A673 (cell line): ENCODE measurements at regions of chr11 and their contacts with region 1.

Region 1: GRCh38 chr11:43852057-43852636 is 28.5 kb upstream of the ALKBH3 start:
- DNase-seq: peak; percentile 92
- H3K4me3 ChIP-seq: no peak overlapping the region
- H3K27ac ChIP-seq: no peak overlapping the region
- H3K4me1 ChIP-seq: no peaks in the 10 kb centered on the region
- H3K27me3 ChIP-seq: no peaks in the 10 kb centered on the region
- CTCF ChIP-seq: peak; percentile 100

Region 2: DNA sequence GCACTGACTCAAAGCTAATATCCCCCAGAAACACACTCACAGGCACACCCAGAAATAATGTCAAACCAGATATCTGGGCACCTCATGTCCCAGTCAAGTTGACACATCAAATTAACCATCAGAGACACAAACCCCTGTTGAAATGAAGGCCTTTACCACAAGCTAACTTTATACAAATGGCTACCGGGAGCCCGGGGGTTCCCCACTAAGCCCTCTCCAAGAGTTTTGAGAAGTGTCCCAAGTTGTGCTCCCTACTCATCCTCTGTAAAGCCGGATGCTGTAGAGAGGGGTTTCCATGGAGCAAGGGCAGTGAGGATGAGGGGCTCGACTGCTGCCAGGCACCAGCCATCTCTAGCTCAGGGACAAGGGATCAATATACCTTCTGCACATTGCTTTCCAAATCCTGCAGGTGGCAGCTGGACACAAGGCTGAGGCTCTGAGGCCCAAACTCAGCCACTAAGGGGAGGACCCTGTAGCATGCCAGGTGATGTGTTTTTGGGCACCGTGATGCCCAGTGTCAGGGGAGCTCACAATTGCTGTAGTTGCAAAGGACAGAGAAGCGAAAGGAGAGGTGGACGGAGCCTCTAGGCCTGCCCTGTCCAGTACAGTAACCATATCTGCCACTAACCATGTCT is 347.7 kb before region 1 on chr11:
- CTCF ChIA-PET with region 1: interaction called, 8 read pairs
- POLR2A ChIA-PET with region 1: no interaction called
- intact Hi-C with region 1: loop called (anchors 5 kb)
- DNase-seq: peak; percentile 54
- H3K4me3 ChIP-seq: no peak overlapping the region
- H3K27ac ChIP-seq: no peak overlapping the region
- H3K4me1 ChIP-seq: no peaks in the 10 kb centered on the region
- H3K27me3 ChIP-seq: no peaks in the 10 kb centered on the region
- CTCF ChIP-seq: peak; percentile 50

Region 3: GRCh38 chr11:43557553-43558110 is 294.5 kb before region 1 on chr11:
- CTCF ChIA-PET with region 1: interaction called, 5 read pairs
- POLR2A ChIA-PET with region 1: no interaction called
- intact Hi-C with region 1: loop called (anchors 5 kb)
- DNase-seq: peak; percentile 56
- H3K4me3 ChIP-seq: peak overlapping the region; percentile 12
- H3K27ac ChIP-seq: no peak overlapping the region
- H3K4me1 ChIP-seq: peaks cover 13% of the 10 kb centered on the region
- H3K27me3 ChIP-seq: peaks cover 97% of the 10 kb centered on the region
- CTCF ChIP-seq: peak; percentile 61

Region 4: DNA sequence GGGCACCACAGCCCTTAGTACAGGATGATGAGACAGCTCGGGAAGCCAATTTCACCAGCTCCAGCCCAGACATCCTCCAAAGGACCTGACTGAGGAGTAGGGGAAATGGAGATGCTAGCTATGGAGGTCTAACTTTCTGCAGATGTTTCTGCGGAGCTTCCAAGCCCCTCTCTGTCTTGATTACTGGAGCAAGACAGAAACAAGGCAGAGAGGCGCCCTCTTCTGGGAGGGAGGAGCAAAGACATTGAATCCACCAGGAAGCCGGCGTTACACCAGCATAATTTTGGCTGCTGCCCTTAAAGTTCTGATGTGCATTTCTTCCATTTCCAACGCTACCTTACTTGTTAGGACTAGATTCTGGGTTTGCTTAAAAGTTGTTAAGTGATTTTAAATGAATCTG is 278.9 kb before region 1 on chr11:
- CTCF ChIA-PET with region 1: interaction called, 19 read pairs
- POLR2A ChIA-PET with region 1: no interaction called
- intact Hi-C with region 1: loop called (anchors 1 kb)
- DNase-seq: peak; percentile 88
- H3K4me3 ChIP-seq: no peak overlapping the region
- H3K27ac ChIP-seq: no peak overlapping the region
- H3K4me1 ChIP-seq: peaks cover 25% of the 10 kb centered on the region
- H3K27me3 ChIP-seq: peaks cover 99% of the 10 kb centered on the region
- CTCF ChIP-seq: peak; percentile 99

Region 5: GRCh38 chr11:43825217-43825816 is 26.8 kb before region 1 on chr11:
- CTCF ChIA-PET with region 1: interaction called, 18 read pairs
- POLR2A ChIA-PET with region 1: no interaction called
- intact Hi-C with region 1: no loop called
- DNase-seq: peak; percentile 75
- H3K4me3 ChIP-seq: no peak overlapping the region
- H3K27ac ChIP-seq: no peak overlapping the region
- H3K4me1 ChIP-seq: no peaks in the 10 kb centered on the region
- H3K27me3 ChIP-seq: no peaks in the 10 kb centered on the region
- CTCF ChIP-seq: peak; percentile 99

Region 6: DNA sequence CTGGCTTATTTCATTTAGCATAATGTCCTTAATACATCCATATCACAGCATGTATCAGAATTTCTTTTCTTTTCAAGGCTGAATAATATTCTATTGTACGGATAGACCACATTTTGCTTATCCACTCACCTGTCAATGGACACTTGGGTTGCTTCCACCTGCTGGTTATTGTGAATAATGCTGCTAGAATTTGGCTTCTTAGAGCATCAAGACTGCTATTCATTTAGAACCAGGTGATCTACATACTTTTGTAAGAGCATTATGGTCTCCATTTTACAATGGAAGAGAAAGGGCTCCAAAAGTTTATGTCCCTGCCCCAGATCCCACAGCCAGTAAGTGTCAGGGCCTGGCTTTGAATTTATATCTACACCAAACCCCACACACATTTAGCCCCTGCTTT is 612.6 kb after region 1 on chr11:
- CTCF ChIA-PET with region 1: no interaction called
- POLR2A ChIA-PET with region 1: no interaction called
- intact Hi-C with region 1: no loop called
- DNase-seq: no peak
- H3K4me3 ChIP-seq: no peak overlapping the region
- H3K27ac ChIP-seq: no peak overlapping the region
- H3K4me1 ChIP-seq: no peaks in the 10 kb centered on the region
- H3K27me3 ChIP-seq: no peaks in the 10 kb centered on the region
- CTCF ChIP-seq: peak; percentile 32; the same call in 1 of the 2 replicates